ENCODE measurements at regions of chr3 and their contacts with region 1.

Region 1: DNA sequence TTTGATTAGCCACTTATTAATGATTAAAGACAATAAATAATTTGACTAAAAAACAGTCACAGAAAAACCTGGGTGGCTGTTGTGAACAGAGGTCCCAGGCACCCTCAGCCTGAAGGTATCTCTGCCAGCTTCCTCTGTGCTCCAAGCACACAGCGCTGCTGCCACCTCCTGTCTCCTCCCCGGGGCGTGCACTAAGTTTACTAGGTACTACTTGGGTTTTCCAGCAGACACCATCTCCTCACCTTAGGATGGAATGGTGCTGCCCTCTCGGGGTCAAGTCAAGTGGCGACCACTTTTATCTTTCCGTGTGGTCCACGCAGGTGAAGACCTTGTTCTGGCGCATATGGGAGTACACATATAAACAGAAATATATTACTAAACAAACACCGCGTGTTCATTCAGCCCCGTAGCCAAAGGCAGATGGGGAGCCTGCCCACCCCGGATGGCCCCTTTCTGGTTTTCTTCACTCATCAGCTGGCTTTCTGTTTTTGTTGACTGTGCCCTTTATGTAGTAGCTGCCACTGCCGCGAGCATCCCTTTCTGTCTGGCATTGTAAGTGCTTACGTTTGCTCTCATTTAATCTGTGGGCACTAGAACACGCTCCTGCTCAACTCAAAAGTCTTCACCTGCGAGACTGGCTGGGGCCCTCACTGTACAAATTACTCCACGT is 128.0 kb downstream of the LRIG1 start:
- DNase-seq: peak; percentile 55
- H3K4me3 Mint-ChIP-seq: no peak overlapping the region
- H3K27ac Mint-ChIP-seq: no peak overlapping the region
- H3K4me1 Mint-ChIP-seq: peaks cover 3% of the 10 kb centered on the region
- H3K27me3 Mint-ChIP-seq: no peaks in the 10 kb centered on the region

Region 2: GRCh38 chr3:66276705-66277274 is 96.0 kb before region 1 on chr3:
- CTCF ChIA-PET with region 1: interaction called, 24 read pairs
- POLR2A ChIA-PET with region 1: interaction called, 7 read pairs
- DNase-seq: peak; percentile 72
- H3K4me3 Mint-ChIP-seq: no peak overlapping the region
- H3K27ac Mint-ChIP-seq: no peak overlapping the region
- H3K4me1 Mint-ChIP-seq: peaks cover 25% of the 10 kb centered on the region
- H3K27me3 Mint-ChIP-seq: no peaks in the 10 kb centered on the region

Measured in activated CD4-positive, alpha-beta memory T cell treated with anti-CD3 and anti-CD28 coated beads, Interleukin-2, amount 10 ng/mL, durations not matched to agents 7 days and 5 days (primary cell).